ENCODE measurements at regions of chr17 and their contacts with region 1.

Region 1: GRCh38 chr17:1365445-1366039 is 34.5 kb downstream of the YWHAE start:
- DNase-seq: peak; percentile 88
- H3K4me3 Mint-ChIP-seq: no peak overlapping the region
- H3K27ac Mint-ChIP-seq: no peak overlapping the region
- H3K4me1 Mint-ChIP-seq: peaks cover 40% of the 10 kb centered on the region
- H3K27me3 Mint-ChIP-seq: no peaks in the 10 kb centered on the region

Region 2: GRCh38 chr17:1212946-1213345 is 152.6 kb before region 1 on chr17:
- intact Hi-C with region 1: no loop called
- DNase-seq: no peak
- H3K4me3 Mint-ChIP-seq: no peak overlapping the region
- H3K27ac Mint-ChIP-seq: no peak overlapping the region
- H3K4me1 Mint-ChIP-seq: no peaks in the 10 kb centered on the region
- H3K27me3 Mint-ChIP-seq: peaks cover 26% of the 10 kb centered on the region

Region 3: GRCh38 chr17:1379930-1380313 is 14.4 kb after region 1 on chr17:
- intact Hi-C with region 1: loop called (anchors 2 kb)
- DNase-seq: no peak
- H3K4me3 Mint-ChIP-seq: peak overlapping the region; percentile 28
- H3K27ac Mint-ChIP-seq: peak overlapping the region; percentile 46
- H3K4me1 Mint-ChIP-seq: peaks cover 59% of the 10 kb centered on the region
- H3K27me3 Mint-ChIP-seq: no peaks in the 10 kb centered on the region

Region 4: GRCh38 chr17:1455797-1456599 is 90.5 kb after region 1 on chr17 and contains the start of gene CRK:
- intact Hi-C with region 1: loop called (anchors 5 kb)
- DNase-seq: peak; percentile 100
- H3K4me3 Mint-ChIP-seq: peak within 1 kb of the TSS; percentile 91
- H3K27ac Mint-ChIP-seq: peak within 1 kb of the TSS; percentile 91
- H3K4me1 Mint-ChIP-seq: peaks cover 24% of the 10 kb centered on the region
- H3K27me3 Mint-ChIP-seq: peaks cover 14% of the 10 kb centered on the region
- total RNA-seq, gene CRK: 22.5 and 24.3 TPM in 2 replicates